Posterior vena cava (tissue), 2 donors: ENCODE measurements at regions of chr18 and their contacts with region 1.

Region 1: GRCh38 chr18:9048808-9049494 is 53.5 kb upstream of the NDUFV2 start:
- DNase-seq: no peak

Region 2: DNA sequence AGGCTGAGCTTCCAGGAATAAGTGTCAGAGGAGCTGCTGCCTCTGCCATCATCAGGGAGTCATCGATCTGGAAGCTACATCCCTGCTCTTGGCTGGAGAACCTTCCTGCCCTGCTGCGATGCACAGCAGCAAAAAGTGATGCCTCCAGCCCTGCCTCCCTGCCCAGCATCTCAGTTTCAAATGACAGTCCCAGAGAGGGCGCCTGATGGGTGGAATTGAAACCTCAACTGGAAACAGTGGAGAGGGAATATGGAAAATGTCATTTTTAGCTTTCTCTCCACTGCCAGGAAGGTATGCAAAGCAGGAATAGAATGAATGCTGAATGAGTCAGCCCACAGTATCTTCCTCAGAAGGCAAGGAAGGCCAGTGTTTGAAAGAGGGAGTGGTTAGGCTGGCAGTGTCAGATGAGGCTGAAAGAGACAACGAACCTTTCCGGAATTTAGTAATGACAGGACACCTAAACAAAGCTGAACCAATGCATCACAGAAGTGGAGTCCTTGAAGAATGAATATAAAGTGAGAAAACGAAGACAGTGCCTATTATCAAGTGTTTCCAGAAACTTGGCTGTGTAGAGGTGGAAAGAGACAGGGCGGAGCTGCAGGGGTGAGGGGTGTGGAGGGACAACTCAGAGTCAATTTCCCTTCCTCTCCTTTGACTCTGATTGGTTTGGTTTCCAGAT is 100.3 kb before region 1 on chr18:
- intact Hi-C with region 1: no loop called
- DNase-seq: no peak

Region 3: DNA sequence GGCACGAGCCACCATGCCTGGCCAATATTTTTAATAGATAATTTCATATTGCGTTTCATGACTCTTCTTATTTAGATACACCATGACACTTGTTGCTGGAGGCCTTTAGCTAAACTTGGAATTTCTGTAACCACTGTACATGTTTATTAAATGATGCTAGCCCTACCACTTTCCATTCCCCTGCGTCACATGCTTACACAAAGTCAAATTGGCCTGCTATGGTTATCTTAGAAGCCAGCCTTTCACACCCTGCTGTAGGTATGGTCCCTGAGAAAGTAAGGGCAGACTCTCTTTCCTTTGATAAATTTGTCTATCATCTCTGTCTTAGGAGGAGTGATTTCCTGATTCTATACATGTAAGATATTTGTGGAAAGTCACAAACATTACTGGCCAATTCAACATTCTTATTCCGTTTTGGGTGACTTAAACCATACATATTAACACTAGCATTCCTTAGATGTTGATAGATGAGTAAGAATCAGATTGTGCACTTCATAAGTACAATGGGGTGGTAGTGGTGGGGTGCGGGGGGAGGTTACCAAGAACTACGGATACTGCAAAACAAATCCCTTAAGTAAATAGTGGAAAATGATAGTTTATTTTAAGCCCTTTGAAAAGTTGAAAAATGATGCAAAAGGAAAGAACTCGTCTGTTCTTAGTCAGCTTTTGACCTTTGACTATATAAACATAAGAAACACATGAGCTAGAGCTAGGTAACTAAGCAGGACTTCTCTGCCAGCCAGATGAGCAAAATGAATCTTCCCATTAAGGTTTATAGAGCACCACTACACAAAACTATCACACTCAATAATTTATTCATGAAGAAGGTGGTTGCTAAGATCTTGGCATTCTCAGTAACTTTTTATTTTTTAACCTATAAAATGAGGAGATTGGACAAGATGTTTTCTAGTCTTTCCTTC is 45.6 kb after region 1 on chr18:
- intact Hi-C with region 1: loop called in 1 of 2 experiments (anchors 1 kb)
- DNase-seq: no peak

Region 4: DNA sequence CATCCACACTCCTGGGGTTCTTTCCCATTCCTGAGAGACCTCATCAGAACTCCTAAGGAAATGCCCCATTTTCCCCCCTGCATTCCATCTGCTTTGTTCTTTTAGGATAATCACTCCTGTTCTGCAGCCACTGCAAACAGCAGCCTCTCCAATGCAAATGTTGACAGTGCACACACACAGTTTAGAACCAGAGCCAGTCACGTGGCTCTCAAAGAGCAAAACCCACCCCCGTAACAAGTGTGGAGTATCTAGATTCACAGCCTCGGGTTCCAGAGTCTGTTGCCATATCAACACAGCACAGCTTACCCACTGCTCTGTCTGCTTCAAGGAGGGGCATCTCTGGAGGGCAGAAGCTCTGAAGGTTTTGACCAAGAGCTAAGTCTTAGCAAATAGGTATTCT is 1656.8 kb after region 1 on chr18:
- intact Hi-C with region 1: no loop called
- DNase-seq: no peak